Colonic mucosa (tissue), 4 donors: ENCODE measurements at regions of chr5 and their contacts with region 1.

Region 1: DNA sequence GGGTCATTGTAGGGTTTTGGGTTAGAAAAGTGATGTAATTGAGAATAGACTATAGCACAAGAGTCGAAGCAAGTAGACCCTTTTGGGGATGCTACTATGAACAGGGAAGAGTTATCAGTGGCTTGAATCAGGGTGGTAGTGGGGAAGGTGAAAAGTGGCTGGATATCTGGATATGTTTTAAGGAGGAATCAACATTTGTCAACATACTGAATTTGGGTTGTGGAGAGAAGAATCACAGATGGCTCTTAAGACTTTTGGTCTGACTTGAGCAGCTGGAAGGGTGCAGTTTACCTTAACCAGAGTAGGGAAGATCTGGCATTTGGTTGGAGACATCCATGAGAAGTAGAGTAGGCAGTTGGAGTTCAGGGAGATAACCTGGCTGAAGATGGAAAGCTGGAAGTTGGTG is 38.5 kb upstream of the FCHO2 start:
- DNase-seq: no peak
- H3K4me3 ChIP-seq: no peak overlapping the region
- H3K27ac ChIP-seq: no peak overlapping the region
- H3K4me1 ChIP-seq: no peaks in the 10 kb centered on the region
- H3K27me3 ChIP-seq: no peaks in the 10 kb centered on the region
- CTCF ChIP-seq: no peak

Region 2: GRCh38 chr5:72878854-72879253 is 38.5 kb before region 1 on chr5:
- intact Hi-C with region 1: no loop called
- DNase-seq: no peak
- H3K4me3 ChIP-seq: no peak overlapping the region
- H3K27ac ChIP-seq: no peak overlapping the region
- H3K4me1 ChIP-seq: no peaks in the 10 kb centered on the region
- H3K27me3 ChIP-seq: no peaks in the 10 kb centered on the region
- CTCF ChIP-seq: no peak

Region 3: DNA sequence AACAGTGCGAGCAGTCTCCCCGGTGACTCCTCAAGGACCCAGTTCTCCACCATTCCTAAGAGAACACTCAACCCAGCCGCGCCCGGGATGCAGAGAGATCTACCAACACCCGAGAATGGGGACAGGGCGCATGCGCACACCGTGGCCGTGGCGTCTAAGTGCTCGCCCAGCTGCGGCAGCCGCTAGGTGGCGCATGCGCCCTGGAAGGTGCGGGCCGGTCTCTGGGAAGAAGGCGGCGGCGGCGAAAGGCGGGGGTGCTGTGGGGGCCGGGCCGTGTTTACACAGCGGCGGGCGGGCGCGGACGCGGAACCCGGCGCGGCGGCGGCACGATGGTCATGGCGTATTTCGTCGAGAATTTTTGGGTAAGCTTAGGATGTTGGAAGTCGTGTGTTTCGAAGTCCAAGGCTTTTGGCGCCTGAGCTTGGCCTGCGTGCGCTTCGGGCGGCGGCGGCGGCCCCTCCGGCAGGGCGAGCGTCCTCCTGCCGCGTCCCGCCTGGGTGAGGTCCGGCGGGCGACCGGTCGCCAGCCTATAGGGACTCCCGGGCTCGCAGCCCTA is 38.5 kb after region 1 on chr5 and contains the start of gene FCHO2:
- intact Hi-C with region 1: no loop called
- DNase-seq: peak; percentile 99
- H3K4me3 ChIP-seq: peak within 1 kb of the TSS; percentile 90
- H3K27ac ChIP-seq: peak within 1 kb of the TSS; percentile 94
- H3K4me1 ChIP-seq: no peaks in the 10 kb centered on the region
- H3K27me3 ChIP-seq: no peaks in the 10 kb centered on the region
- CTCF ChIP-seq: peak; percentile 71
- total RNA-seq, gene FCHO2: 30.9 to 56.5 TPM

Region 4: DNA sequence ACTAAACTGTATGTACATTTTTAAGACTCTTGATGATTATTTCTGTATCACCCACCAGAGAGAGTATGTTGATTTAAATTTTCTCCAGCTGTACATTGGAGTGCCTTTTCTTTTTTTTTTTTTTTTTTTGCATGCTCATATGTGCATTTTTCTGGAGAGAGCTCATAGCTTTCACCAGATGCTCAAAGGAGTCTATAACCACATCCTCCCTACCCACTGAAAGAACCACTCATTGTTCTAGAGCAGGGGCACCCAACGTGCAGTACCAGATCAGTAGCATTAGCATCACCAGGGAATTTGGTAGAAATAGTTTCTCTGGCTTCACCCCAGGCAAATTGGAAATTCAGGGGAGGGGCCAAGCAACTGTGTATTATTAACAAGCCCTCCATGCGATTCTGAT is 149.1 kb after region 1 on chr5:
- intact Hi-C with region 1: loop called (anchors 10 kb)
- DNase-seq: no peak
- H3K4me3 ChIP-seq: no peak overlapping the region
- H3K27ac ChIP-seq: no peak overlapping the region
- H3K4me1 ChIP-seq: no peaks in the 10 kb centered on the region
- H3K27me3 ChIP-seq: no peaks in the 10 kb centered on the region
- CTCF ChIP-seq: no peak